A673 (cell line): ENCODE measurements at regions of chr10 and their contacts with region 1.

Region 1: GRCh38 chr10:15433850-15434537 is 62.9 kb upstream of the FAM171A1 start:
- DNase-seq: peak; percentile 77
- H3K4me3 ChIP-seq: peak overlapping the region; percentile 45
- H3K27ac ChIP-seq: no peak overlapping the region
- H3K4me1 ChIP-seq: no peaks in the 10 kb centered on the region
- H3K27me3 ChIP-seq: peaks cover 22% of the 10 kb centered on the region
- CTCF ChIP-seq: peak; percentile 77

Region 2: GRCh38 chr10:15189133-15189885 is 244.7 kb before region 1 on chr10:
- CTCF ChIA-PET with region 1: no interaction called
- POLR2A ChIA-PET with region 1: no interaction called
- intact Hi-C with region 1: no loop called
- DNase-seq: no peak
- H3K4me3 ChIP-seq: no peak overlapping the region
- H3K27ac ChIP-seq: no peak overlapping the region
- H3K4me1 ChIP-seq: no peaks in the 10 kb centered on the region
- H3K27me3 ChIP-seq: no peaks in the 10 kb centered on the region
- CTCF ChIP-seq: no peak

Region 3: GRCh38 chr10:15585303-15585715 is 151.3 kb after region 1 on chr10:
- CTCF ChIA-PET with region 1: interaction called, 5 read pairs
- POLR2A ChIA-PET with region 1: no interaction called
- intact Hi-C with region 1: loop called (anchors 5 kb)
- DNase-seq: peak; percentile 87
- H3K4me3 ChIP-seq: no peak overlapping the region
- H3K27ac ChIP-seq: no peak overlapping the region
- H3K4me1 ChIP-seq: no peaks in the 10 kb centered on the region
- H3K27me3 ChIP-seq: peaks cover 2% of the 10 kb centered on the region
- CTCF ChIP-seq: peak; percentile 90

Region 4: GRCh38 chr10:15620836-15621515 is 187.0 kb after region 1 on chr10:
- CTCF ChIA-PET with region 1: no interaction called
- POLR2A ChIA-PET with region 1: no interaction called
- intact Hi-C with region 1: no loop called
- DNase-seq: no peak
- H3K4me3 ChIP-seq: no peak overlapping the region
- H3K27ac ChIP-seq: no peak overlapping the region
- H3K4me1 ChIP-seq: no peaks in the 10 kb centered on the region
- H3K27me3 ChIP-seq: peaks cover 22% of the 10 kb centered on the region
- CTCF ChIP-seq: no peak

Region 5: GRCh38 chr10:15695852-15696251 is 261.9 kb after region 1 on chr10:
- CTCF ChIA-PET with region 1: interaction called, 14 read pairs
- POLR2A ChIA-PET with region 1: no interaction called
- intact Hi-C with region 1: no loop called
- DNase-seq: no peak
- H3K4me3 ChIP-seq: no peak overlapping the region
- H3K27ac ChIP-seq: no peak overlapping the region
- H3K4me1 ChIP-seq: no peaks in the 10 kb centered on the region
- H3K27me3 ChIP-seq: peaks cover 18% of the 10 kb centered on the region
- CTCF ChIP-seq: no peak

Region 6: GRCh38 chr10:15719899-15720634 is 286.1 kb after region 1 on chr10 and contains the start of gene ITGA8:
- CTCF ChIA-PET with region 1: interaction called, 3 read pairs
- POLR2A ChIA-PET with region 1: no interaction called
- intact Hi-C with region 1: loop called (anchors 1 kb)
- DNase-seq: peak; percentile 40
- H3K4me3 ChIP-seq: peak within 1 kb of the TSS; percentile 29
- H3K27ac ChIP-seq: no peak within 1 kb of the TSS
- H3K4me1 ChIP-seq: no peaks in the 10 kb centered on the region
- H3K27me3 ChIP-seq: peaks cover 78% of the 10 kb centered on the region
- CTCF ChIP-seq: peak; percentile 48
- total RNA-seq, gene ITGA8: 0.07 TPM in 1 of 2 replicates, not detected in the other

Region 7: GRCh38 chr10:15725603-15726002 is 291.6 kb after region 1 on chr10:
- CTCF ChIA-PET with region 1: interaction called, 3 read pairs
- POLR2A ChIA-PET with region 1: no interaction called
- intact Hi-C with region 1: loop called (anchors 2 kb)
- DNase-seq: peak; percentile 70
- H3K4me3 ChIP-seq: no peak overlapping the region
- H3K27ac ChIP-seq: no peak overlapping the region
- H3K4me1 ChIP-seq: no peaks in the 10 kb centered on the region
- H3K27me3 ChIP-seq: peaks cover 37% of the 10 kb centered on the region
- CTCF ChIP-seq: peak; percentile 68

Region 8: GRCh38 chr10:15744217-15744865 is 310.3 kb after region 1 on chr10:
- CTCF ChIA-PET with region 1: no interaction called
- POLR2A ChIA-PET with region 1: no interaction called
- intact Hi-C with region 1: loop called (anchors 5 kb)
- DNase-seq: peak; percentile 74
- H3K4me3 ChIP-seq: no peak overlapping the region
- H3K27ac ChIP-seq: no peak overlapping the region
- H3K4me1 ChIP-seq: no peaks in the 10 kb centered on the region
- H3K27me3 ChIP-seq: no peaks in the 10 kb centered on the region
- CTCF ChIP-seq: peak; percentile 82

Region 9: GRCh38 chr10:15824498-15824897 is 390.5 kb after region 1 on chr10:
- CTCF ChIA-PET with region 1: no interaction called
- POLR2A ChIA-PET with region 1: no interaction called
- intact Hi-C with region 1: loop called (anchors 5 kb)
- DNase-seq: peak; percentile 12
- H3K4me3 ChIP-seq: no peak overlapping the region
- H3K27ac ChIP-seq: no peak overlapping the region
- H3K4me1 ChIP-seq: no peaks in the 10 kb centered on the region
- H3K27me3 ChIP-seq: no peaks in the 10 kb centered on the region
- CTCF ChIP-seq: peak; percentile 63